Ascending aorta (tissue), 2 donors: ENCODE measurements at regions of chr15 and their contacts with region 1.

Region 1: DNA sequence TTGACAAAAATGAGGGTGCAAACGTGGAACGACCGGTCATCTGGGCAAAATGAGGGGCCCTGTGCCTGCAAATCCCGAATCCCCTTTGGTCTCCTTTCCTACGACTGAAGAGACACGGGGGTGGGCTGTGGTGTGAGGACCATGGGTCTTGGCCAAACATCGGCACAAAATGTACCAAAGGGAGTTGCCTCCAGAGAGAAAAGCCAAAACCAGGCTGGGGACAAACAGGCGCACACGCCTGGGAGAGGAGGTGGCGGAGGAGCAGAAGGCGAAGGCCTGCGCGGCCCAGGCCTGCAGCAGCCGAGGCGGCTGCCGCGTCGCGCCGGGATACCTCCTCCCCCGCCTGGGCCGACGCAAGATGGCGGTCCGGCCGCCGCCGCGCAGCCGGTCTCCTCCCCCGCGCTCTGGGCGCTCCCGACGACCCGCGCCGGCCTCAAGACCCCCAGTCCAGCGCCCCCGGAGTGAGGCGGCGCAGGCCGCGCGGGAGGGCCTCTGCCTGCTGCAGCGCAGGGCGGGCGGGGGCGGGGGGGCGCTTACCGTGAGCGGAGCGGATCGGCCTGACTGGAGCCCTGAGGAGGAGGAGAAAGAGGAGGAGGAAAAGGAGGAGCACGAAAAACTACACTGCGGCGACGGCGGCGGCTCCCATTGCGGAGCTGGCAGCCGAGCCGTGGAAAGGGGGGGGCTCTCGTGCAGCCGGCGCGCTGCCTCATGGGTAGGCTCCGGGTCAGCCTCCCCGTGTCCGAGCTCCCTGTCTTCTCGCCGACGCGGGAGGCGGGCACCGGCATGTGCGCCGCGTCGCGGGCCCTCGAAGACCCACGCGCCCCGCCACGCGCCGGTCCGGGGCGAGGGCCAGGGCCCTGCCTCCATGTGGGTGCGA is at the start of gene ZNF280D:
- DNase-seq: peak; percentile 25 to 93
- H3K4me3 ChIP-seq: peak within 1 kb of the TSS; percentile 78 to 94
- H3K27ac ChIP-seq: peak within 1 kb of the TSS; percentile 95 to 96
- H3K4me1 ChIP-seq: peaks cover 7 to 31% of the 10 kb centered on the region in 2 donors
- H3K27me3 ChIP-seq: no peaks in the 10 kb centered on the region
- CTCF ChIP-seq: no peak
- total RNA-seq, gene ZNF280D: 20.5 TPM

Region 2: GRCh38 chr15:56794165-56794552 is 61.0 kb after region 1 on chr15:
- intact Hi-C with region 1: loop called (anchors 5 kb)
- DNase-seq: no peak
- H3K4me3 ChIP-seq: no peak overlapping the region
- H3K27ac ChIP-seq: peak overlapping the region; percentile 20 to 52
- H3K4me1 ChIP-seq: no peaks in the 10 kb centered on the region
- H3K27me3 ChIP-seq: no peaks in the 10 kb centered on the region
- CTCF ChIP-seq: no peak

Region 3: DNA sequence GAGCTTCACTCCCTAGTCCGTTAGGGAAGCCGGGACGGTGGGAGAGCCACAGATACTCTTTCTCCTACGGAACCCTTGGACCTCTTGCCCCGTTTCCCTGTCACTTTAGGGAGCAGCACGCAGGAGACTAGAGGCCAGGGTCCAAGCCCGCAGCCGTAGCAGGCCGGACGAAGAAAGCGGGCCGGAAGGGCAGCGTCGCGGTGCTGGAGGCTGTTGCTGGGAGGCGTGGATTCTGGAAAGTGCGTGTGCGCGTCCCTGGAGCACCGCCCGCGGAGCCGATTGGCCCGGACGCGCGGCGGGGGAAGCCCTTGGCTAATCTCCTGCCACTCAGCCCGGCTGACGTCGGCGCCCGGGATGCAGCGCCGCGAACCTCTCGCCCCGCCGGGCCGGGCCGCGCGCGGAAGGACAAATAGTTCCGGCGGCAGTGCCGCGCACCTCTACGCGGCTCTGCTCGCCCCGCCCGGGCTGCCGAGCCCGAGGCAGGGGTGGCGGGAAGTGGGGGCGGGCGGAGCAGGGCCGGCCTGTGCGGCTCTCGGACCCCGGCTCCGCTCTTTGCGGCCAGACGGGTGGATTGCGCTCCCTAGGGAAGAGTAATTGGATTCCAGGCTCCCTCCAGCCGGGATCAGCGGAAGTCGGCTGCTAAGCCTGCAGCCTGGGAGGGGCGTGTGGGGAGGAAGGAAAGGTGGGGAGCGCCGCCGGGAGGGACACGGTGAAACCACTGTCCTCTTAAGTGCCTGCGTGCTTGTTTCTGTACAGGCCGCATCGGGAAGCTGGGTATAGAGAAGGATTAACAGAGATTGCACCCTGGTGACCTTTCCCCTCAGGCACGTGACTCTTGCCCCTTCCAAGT is 154.0 kb after region 1 on chr15:
- intact Hi-C with region 1: loop called (anchors 1 kb)
- DNase-seq: peak; percentile 64 to 96
- H3K4me3 ChIP-seq: peak overlapping the region; percentile 68 to 93
- H3K27ac ChIP-seq: peak overlapping the region; percentile 93 to 99
- H3K4me1 ChIP-seq: peaks cover 3 to 20% of the 10 kb centered on the region in 2 donors
- H3K27me3 ChIP-seq: no peaks in the 10 kb centered on the region
- CTCF ChIP-seq: no peak